ENCODE measurements at regions of chrX and their contacts with region 1.

Region 1: GRCh38 chrX:139932901-139933796 is at the start of gene ATP11C:
- DNase-seq: peak; percentile 71 to 78
- H3K4me3 ChIP-seq: peak within 1 kb of the TSS; percentile 74
- H3K27ac ChIP-seq: peak within 1 kb of the TSS; percentile 74
- H3K4me1 ChIP-seq: 0 out of 2 replicates have a peak, but pooled peaks cover 6% of the 10 kb centered on the region
- H3K27me3 ChIP-seq: no peaks in the 10 kb centered on the region
- CTCF ChIP-seq: no peak
- total RNA-seq, gene ATP11C: 11.1 and 13.0 TPM in 2 replicates

Region 2: DNA sequence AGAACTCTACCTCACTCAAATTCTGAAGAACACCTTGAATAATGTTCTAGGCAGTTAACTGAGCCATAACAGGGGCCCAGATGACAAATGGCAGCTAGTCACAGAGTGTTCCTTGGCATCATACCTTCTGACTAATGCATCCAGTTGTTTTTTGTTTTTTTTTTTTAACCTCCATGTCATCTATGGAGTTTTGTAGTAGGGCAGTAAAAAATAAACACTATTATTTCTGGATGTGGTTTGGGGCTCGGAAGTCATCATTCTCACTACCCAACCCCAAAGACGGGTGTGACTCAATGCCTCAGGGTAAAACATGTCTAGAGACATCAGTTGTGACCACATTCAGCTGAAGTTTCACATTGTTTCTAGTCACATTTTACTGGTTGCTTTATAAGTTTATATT is 194.0 kb before region 1 on chrX:
- CTCF ChIA-PET with region 1: no interaction called
- POLR2A ChIA-PET with region 1: no interaction called
- intact Hi-C with region 1: loop called (anchors 2 kb)
- DNase-seq: peak; percentile 11 to 37
- H3K4me3 ChIP-seq: no peak overlapping the region
- H3K27ac ChIP-seq: no peak overlapping the region
- H3K4me1 ChIP-seq: peaks cover 10% of the 10 kb centered on the region
- H3K27me3 ChIP-seq: no peaks in the 10 kb centered on the region
- CTCF ChIP-seq: no peak

Region 3: GRCh38 chrX:139811942-139812629 is 121.1 kb before region 1 on chrX:
- CTCF ChIA-PET with region 1: no interaction called
- POLR2A ChIA-PET with region 1: no interaction called
- intact Hi-C with region 1: loop called (anchors 10 kb)
- DNase-seq: no peak
- H3K4me3 ChIP-seq: no peak overlapping the region
- H3K27ac ChIP-seq: no peak overlapping the region
- H3K4me1 ChIP-seq: no peaks in the 10 kb centered on the region
- H3K27me3 ChIP-seq: no peaks in the 10 kb centered on the region
- CTCF ChIP-seq: no peak

Region 4: GRCh38 chrX:139890991-139891700 is 42.0 kb before region 1 on chrX:
- CTCF ChIA-PET with region 1: no interaction called
- POLR2A ChIA-PET with region 1: interaction called, 7 read pairs
- intact Hi-C with region 1: loop called (anchors 2 kb)
- DNase-seq: peak; percentile 9 to 74
- H3K4me3 ChIP-seq: 0 out of 2 replicates have a peak overlapping the region, but pooled peaks have one; percentile 11
- H3K27ac ChIP-seq: no peak overlapping the region
- H3K4me1 ChIP-seq: 0 out of 2 replicates have a peak, but pooled peaks cover 12% of the 10 kb centered on the region
- H3K27me3 ChIP-seq: no peaks in the 10 kb centered on the region
- CTCF ChIP-seq: no peak

Region 5: GRCh38 chrX:141405842-141406492 is 1472.8 kb after region 1 on chrX:
- CTCF ChIA-PET with region 1: no interaction called
- POLR2A ChIA-PET with region 1: interaction called, 12 read pairs
- intact Hi-C with region 1: no loop called
- DNase-seq: peak; percentile 38 to 77
- H3K4me3 ChIP-seq: no peak overlapping the region
- H3K27ac ChIP-seq: peak overlapping the region; percentile 80
- H3K4me1 ChIP-seq: peaks cover 12% of the 10 kb centered on the region; the same call in 1 of the 2 replicates
- H3K27me3 ChIP-seq: no peaks in the 10 kb centered on the region
- CTCF ChIP-seq: no peak

Measured in PC-9 (cell line).